Naive thymus-derived CD4-positive, alpha-beta T cell (primary cell): ENCODE measurements at regions of chr12 and their contacts with region 1.

Region 1: DNA sequence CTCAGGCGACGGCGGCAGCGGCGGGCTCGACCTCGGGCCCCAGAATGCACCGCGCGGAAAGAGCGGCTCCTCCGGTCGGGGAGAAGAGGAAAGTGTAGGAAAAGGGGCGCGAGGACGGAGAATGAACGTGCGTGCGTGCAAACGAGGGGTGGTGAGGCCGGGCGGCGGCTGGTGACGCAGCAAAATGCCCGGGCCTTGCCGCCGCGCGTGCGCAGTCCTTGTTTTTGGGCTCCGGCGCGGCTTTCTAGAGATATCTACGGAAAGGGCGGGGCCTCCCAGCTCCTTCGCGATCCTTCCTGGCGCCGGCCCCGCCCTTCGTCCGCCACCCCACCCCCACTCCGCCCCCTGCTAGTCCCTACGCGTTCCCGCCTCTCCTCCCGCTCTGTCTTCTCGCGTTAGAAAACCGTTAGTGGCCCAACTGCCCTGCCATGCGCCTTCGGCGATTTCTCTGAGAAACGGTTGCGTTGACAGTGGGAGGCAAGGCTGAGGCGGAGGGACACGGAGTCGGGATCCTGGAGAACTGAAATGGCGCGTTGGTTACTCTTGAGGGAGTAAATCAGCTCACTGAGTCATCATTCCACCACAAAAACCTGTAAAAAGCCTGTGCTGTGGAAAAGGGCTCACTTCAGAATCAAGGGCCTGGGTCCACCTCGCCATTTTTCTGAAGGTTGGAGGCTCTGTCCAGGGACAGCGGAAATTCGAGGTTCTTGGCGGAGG is at the start of gene PTGES3:
- DNase-seq: peak; percentile 95 to 98 (median 98)
- ATAC-seq: peak; percentile 87
- H3K4me3 ChIP-seq: peak within 1 kb of the TSS; percentile 80
- H3K4me3 Mint-ChIP-seq: peak within 1 kb of the TSS; percentile 97 to 100 (median 100)
- H3K27ac ChIP-seq: peak within 1 kb of the TSS; percentile 98
- H3K27ac Mint-ChIP-seq: peak within 1 kb of the TSS; percentile 95 to 100 (median 99)
- H3K4me1 ChIP-seq: peaks cover 12 to 19% of the 10 kb centered on the region in 2 donors
- H3K4me1 Mint-ChIP-seq: peaks cover 20 to 41% (median 34%) of the 10 kb centered on the region in 7 donors
- H3K27me3 ChIP-seq: no peaks in the 10 kb centered on the region
- H3K27me3 Mint-ChIP-seq: no peaks in the 10 kb centered on the region
- total RNA-seq, gene PTGES3: 111 to 229 (median 153) TPM

Region 2: DNA sequence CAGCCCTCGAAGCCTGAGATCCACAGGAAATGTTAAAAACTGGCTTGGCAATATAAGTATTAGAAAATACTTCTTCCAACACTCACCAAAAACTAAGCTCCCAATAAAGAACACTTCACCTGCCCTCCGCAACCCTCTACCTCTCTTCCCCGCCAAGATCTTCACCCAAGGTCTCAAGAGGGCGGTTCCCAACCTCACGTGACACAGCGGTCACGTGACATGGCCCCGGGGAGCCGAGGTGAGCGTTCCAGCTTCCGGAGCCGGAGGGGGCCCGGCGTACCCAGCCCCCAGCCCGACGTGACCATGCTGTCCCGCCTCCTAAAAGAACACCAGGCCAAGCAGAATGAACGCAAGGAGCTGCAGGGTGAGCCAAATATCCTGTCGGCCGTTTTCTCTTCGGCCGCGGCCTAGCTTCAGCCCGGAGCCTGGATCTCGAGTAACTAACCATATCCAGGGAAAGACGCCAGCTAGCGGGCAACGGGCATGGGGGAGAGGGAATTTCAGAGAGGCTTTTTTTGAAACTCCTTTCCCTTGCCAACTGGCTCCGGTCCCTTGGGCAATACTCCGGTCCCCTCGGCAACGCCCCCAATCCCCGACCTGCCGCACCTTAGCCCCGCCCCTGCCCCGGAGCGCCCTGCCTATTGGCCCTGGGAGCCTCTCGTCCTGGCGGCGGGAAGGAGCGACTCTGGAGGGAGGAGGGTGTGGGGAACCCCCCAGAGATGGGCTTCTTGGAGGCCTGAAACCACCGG is 972.3 kb before region 1 on chr12 and contains the start of gene BLOC1S1:
- CTCF ChIA-PET with region 1: no interaction called
- POLR2A ChIA-PET with region 1: no interaction called
- intact Hi-C with region 1: loop called in 1 of 2 experiments (anchors 5 kb)
- DNase-seq: peak; percentile 82 to 95 (median 90)
- ATAC-seq: peak; percentile 96
- H3K4me3 ChIP-seq: peak within 1 kb of the TSS; percentile 96
- H3K4me3 Mint-ChIP-seq: peak within 1 kb of the TSS; percentile 83 to 98 (median 94)
- H3K27ac ChIP-seq: peak within 1 kb of the TSS; percentile 92
- H3K27ac Mint-ChIP-seq: peak within 1 kb of the TSS; percentile 91 to 98 (median 97)
- H3K4me1 ChIP-seq: peaks cover 19 to 23% of the 10 kb centered on the region in 2 donors
- H3K4me1 Mint-ChIP-seq: peaks cover 15 to 41% (median 36%) of the 10 kb centered on the region in 7 donors
- H3K27me3 ChIP-seq: no peaks in the 10 kb centered on the region
- H3K27me3 Mint-ChIP-seq: peaks cover 0 to 21% (median 0%) of the 10 kb centered on the region in 5 donors
- total RNA-seq, gene BLOC1S1: 37.6 to 112 (median 71.5) TPM

Region 3: DNA sequence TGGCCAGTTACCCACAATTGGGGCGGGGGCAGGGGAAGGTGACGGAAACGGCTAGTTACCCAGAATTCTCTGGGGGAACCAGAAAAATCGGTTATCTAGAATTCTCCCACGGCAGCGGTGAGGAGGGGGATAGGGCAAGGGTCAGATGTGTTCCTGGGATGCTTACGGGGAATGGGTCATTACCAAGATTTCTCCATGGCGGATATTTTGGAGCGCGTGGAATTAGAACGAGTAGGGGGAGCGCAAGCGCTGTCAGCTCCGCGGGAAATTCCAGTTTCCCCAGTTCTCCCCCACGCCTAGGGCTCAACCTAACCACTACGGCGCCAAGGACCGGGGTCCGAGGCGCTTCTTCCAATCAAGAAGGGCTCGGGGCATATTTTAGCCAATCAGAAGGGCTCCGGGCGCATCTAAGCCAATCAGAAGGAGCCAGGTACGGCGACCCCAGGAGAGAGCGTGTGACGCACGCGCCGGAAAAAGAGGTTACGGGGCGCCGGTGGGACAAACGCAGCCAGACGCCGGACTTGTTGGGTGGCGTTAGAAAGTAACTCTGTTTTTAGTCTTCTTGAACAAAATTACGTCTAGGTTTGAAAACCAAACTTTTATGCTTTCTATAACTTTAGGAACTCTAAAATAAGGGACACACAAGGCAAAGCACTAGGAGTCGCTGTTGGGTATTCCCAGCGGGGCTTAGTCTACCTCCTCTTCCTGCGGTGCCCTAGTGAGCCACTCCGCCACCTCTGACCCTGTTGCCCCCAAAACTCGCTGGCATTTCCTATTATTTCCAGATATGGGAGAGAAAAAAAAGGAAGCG is 354.4 kb before region 1 on chr12 and contains the start of gene PAN2:
- CTCF ChIA-PET with region 1: no interaction called
- POLR2A ChIA-PET with region 1: interaction called, 4 read pairs
- intact Hi-C with region 1: loop called in 1 of 2 experiments (anchors 2 kb)
- DNase-seq: peak; percentile 74 to 94 (median 92)
- ATAC-seq: peak; percentile 90
- H3K4me3 ChIP-seq: peak within 1 kb of the TSS; percentile 93
- H3K4me3 Mint-ChIP-seq: peak within 1 kb of the TSS; percentile 89 to 99 (median 95)
- H3K27ac ChIP-seq: peak within 1 kb of the TSS; percentile 98
- H3K27ac Mint-ChIP-seq: peak within 1 kb of the TSS; percentile 97 to 100 (median 99)
- H3K4me1 ChIP-seq: peaks cover 27 to 30% of the 10 kb centered on the region in 2 donors
- H3K4me1 Mint-ChIP-seq: peaks cover 16 to 66% (median 48%) of the 10 kb centered on the region in 7 donors
- H3K27me3 ChIP-seq: no peaks in the 10 kb centered on the region
- H3K27me3 Mint-ChIP-seq: peaks cover 0 to 2% (median 0%) of the 10 kb centered on the region in 5 donors
- total RNA-seq, gene PAN2: 65.8 to 279 (median 144) TPM

Region 4: DNA sequence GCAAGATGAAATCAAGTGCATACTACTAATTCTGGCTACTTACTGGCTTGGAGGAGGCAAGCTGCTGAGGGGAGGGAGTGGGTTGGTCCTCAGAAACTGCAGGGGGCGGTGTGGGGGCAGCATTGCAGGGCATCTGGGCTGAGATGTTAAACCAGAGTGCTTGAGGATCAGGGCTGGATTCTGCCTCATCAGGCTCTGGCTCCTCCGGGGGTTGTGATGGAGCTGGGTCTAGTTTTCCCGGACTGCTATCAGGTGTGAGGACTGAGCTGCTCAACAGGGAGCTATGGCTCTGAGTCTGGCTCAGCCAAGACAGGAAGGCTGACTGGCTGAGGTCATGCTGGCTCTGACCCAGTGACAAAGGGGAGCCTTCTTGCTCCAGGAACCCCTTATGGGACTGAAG is 86.8 kb before region 1 on chr12:
- CTCF ChIA-PET with region 1: no interaction called
- POLR2A ChIA-PET with region 1: no interaction called
- intact Hi-C with region 1: no loop called
- DNase-seq: peak in 6 of 9 donors; percentile 21 to 46 (median 32)
- ATAC-seq: peak; percentile 53
- H3K4me3 ChIP-seq: no peak overlapping the region
- H3K4me3 Mint-ChIP-seq: no peak overlapping the region
- H3K27ac ChIP-seq: no peak overlapping the region
- H3K27ac Mint-ChIP-seq: peak overlapping the region in 3 of 9 donors; percentile 38 to 59 (median 40)
- H3K4me1 ChIP-seq: no peaks in the 10 kb centered on the region
- H3K4me1 Mint-ChIP-seq: peaks cover 0 to 5% (median 0%) of the 10 kb centered on the region in 7 donors
- H3K27me3 ChIP-seq: no peaks in the 10 kb centered on the region
- H3K27me3 Mint-ChIP-seq: no peaks in the 10 kb centered on the region

Region 5: DNA sequence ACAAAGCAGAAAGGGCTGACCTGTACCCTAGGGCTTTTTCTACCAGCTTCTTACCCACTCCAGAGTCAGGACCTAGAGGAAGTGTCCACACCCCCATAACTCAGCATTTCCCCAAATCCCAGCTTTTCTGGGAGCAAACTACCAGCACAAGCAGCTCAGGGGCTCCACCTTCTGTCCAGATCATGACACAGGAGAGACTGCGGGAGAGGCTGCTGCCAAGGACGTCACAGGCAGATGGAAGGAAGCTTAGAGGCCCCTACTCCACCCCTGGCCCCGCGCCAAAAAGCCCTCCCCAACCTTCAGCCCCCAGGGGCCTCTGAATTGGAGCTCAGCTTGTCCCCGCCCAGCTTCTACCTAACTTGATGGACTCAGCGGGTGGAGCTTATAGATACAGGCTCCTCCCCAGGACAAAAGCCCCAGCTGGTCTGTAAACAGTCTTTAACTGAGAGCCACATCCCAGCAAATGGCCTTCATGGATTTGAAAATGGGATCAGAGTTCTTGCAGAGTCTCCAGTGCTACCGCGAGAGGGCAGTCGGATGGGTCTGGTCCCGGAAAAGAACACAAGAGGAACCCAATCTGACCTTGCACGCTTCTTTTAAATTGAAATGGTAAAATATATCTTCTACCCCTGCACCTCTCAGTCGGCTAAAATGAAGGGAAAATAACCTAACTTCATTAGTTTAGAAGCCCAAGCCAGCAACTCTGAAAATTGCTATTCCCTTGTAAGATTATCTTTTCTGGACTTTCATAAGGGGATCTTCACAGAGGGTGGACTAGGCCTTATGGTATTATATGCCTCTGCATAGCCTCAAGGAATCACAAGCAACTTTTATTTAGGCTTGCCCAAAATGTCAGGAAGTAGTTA is 51.4 kb before region 1 on chr12:
- CTCF ChIA-PET with region 1: interaction called, 6 read pairs
- POLR2A ChIA-PET with region 1: interaction called, 103 read pairs
- intact Hi-C with region 1: loop called (anchors 1 kb)
- DNase-seq: peak; percentile 86 to 99 (median 94)
- ATAC-seq: peak; percentile 83
- H3K4me3 ChIP-seq: peak overlapping the region; percentile 73
- H3K4me3 Mint-ChIP-seq: peak overlapping the region; percentile 87 to 100 (median 96)
- H3K27ac ChIP-seq: peak overlapping the region; percentile 83
- H3K27ac Mint-ChIP-seq: peak overlapping the region; percentile 89 to 99 (median 97)
- H3K4me1 ChIP-seq: peaks cover 27 to 36% of the 10 kb centered on the region in 2 donors
- H3K4me1 Mint-ChIP-seq: peaks cover 28 to 69% (median 57%) of the 10 kb centered on the region in 7 donors
- H3K27me3 ChIP-seq: no peaks in the 10 kb centered on the region
- H3K27me3 Mint-ChIP-seq: no peaks in the 10 kb centered on the region

Region 6: DNA sequence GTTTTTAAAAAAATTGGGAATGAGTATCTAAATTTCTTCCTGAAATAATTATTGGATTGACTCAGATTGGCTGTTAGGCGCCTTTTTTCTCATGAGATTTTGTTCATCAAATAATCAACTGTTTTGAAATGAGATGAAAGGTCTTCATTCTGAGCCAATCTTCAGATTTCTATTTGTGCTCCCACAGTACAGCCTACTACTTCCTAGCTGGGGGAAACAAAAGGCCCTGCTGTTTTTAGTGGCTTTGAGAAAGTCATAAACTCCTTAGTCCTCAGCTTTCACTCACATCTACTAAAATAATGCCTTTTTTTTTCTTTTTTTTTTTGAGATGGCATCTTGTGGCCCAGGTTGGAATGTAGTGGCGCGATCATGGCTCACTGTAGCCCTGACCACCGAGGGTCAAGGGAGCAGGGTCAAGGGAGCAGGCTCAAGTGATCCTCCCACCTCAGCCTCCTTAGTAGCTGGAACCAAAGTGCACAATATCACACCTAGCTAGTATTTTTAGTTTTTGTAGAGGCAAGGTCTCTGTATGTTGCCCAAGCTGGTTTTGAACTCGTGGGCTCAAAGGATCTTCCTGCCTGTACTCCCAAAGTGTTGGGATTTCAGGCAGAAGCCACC is 21.6 kb after region 1 on chr12:
- CTCF ChIA-PET with region 1: no interaction called
- POLR2A ChIA-PET with region 1: interaction called, 4 read pairs
- intact Hi-C with region 1: loop called in 1 of 2 experiments (anchors 1 kb)
- DNase-seq: no peak
- ATAC-seq: no peak
- H3K4me3 ChIP-seq: no peak overlapping the region
- H3K4me3 Mint-ChIP-seq: no peak overlapping the region
- H3K27ac ChIP-seq: peak overlapping the region; percentile 14
- H3K27ac Mint-ChIP-seq: peak overlapping the region in 6 of 9 donors; percentile 28 to 72 (median 58)
- H3K4me1 ChIP-seq: no peaks in the 10 kb centered on the region
- H3K4me1 Mint-ChIP-seq: peaks cover 0 to 15% (median 8%) of the 10 kb centered on the region in 7 donors
- H3K27me3 ChIP-seq: no peaks in the 10 kb centered on the region
- H3K27me3 Mint-ChIP-seq: no peaks in the 10 kb centered on the region

Region 7: DNA sequence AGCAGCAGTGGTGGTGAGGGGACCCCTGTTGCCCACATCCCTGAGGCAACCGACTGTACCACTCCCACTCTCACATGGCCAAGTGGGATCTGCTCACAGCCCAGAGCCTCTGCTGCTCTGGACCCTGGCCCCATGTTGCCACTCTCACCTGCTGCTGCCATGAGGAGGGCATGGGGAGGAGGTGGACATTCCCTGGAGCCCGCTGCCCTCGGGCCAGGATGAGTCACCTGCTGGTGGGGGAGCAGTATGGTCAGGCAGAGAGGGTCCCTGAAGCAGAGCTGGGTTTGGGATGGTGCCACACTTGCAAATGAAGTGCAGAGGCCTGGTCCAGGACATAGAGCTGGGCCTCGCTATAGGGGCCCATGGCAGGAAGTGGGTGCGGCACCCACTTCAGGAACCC is 219.8 kb after region 1 on chr12:
- CTCF ChIA-PET with region 1: no interaction called
- POLR2A ChIA-PET with region 1: no interaction called
- intact Hi-C with region 1: no loop called
- DNase-seq: no peak
- ATAC-seq: no peak
- H3K4me3 ChIP-seq: no peak overlapping the region
- H3K4me3 Mint-ChIP-seq: no peak overlapping the region
- H3K27ac ChIP-seq: no peak overlapping the region
- H3K27ac Mint-ChIP-seq: no peak overlapping the region
- H3K4me1 ChIP-seq: no peaks in the 10 kb centered on the region
- H3K4me1 Mint-ChIP-seq: no peaks in the 10 kb centered on the region
- H3K27me3 ChIP-seq: no peaks in the 10 kb centered on the region
- H3K27me3 Mint-ChIP-seq: peaks cover 9 to 27% (median 21%) of the 10 kb centered on the region in 5 donors

Region 8: GRCh38 chr12:57058454-57058853 is 370.2 kb after region 1 on chr12:
- CTCF ChIA-PET with region 1: no interaction called
- POLR2A ChIA-PET with region 1: no interaction called
- intact Hi-C with region 1: no loop called
- DNase-seq: no peak
- ATAC-seq: no peak
- H3K4me3 ChIP-seq: no peak overlapping the region
- H3K4me3 Mint-ChIP-seq: no peak overlapping the region
- H3K27ac ChIP-seq: no peak overlapping the region
- H3K27ac Mint-ChIP-seq: peak overlapping the region in 4 of 9 donors; percentile 13 to 59 (median 36)
- H3K4me1 ChIP-seq: peaks cover 5 to 7% of the 10 kb centered on the region in 2 donors
- H3K4me1 Mint-ChIP-seq: peaks cover 0 to 17% (median 14%) of the 10 kb centered on the region in 7 donors
- H3K27me3 ChIP-seq: no peaks in the 10 kb centered on the region
- H3K27me3 Mint-ChIP-seq: no peaks in the 10 kb centered on the region

Region 9: DNA sequence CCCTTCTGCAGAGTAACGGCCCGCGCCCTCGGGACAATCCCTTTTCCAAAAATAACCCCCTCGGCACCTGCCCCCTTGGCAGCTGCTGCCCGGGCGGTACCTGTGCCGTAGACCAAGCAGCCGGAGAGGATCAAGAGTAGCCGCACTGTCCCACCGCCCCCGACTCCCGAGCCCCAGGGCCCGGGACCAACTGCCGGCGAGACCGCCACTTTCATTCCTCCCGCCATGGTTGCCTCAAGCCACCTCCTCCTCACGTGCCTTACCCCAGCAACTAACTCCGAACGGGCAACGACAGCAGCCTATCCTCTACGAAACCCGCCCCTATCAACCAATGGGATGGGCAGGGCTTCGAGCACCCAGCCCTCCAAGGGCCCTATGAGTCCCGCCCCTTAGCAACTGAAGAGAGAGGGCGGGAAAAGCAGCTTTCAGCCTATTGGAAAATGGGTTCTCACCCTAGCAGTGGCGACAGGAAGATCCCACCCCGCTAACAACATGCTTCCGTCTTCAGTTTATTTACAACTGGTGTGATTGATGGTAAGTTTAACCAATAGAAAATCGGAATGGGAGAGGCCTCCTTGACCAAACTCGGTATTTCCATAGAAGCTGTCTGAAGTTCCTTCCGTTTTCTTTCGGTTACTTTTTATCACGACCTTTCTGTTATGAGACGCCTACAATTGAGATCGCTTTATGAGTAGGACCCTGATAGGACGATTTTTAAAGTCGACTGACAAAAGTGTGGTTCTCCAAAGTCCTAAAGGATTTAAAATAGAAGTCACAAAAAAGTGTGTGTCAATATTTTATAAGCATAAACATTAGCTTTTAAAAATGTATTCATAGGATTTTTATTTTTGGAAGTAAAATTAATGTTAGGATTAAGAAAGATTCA is 390.5 kb after region 1 on chr12 and contains the start of gene NEMP1:
- CTCF ChIA-PET with region 1: no interaction called
- POLR2A ChIA-PET with region 1: interaction called, 4 read pairs
- intact Hi-C with region 1: loop called in 1 of 2 experiments (anchors 1 kb)
- DNase-seq: peak; percentile 65 to 99 (median 98)
- ATAC-seq: peak; percentile 98
- H3K4me3 ChIP-seq: peak within 1 kb of the TSS; percentile 84
- H3K4me3 Mint-ChIP-seq: peak within 1 kb of the TSS; percentile 86 to 99 (median 94)
- H3K27ac ChIP-seq: peak within 1 kb of the TSS; percentile 85
- H3K27ac Mint-ChIP-seq: peak within 1 kb of the TSS; percentile 89 to 99 (median 92)
- H3K4me1 ChIP-seq: peaks cover 6 to 7% of the 10 kb centered on the region in 2 donors
- H3K4me1 Mint-ChIP-seq: peaks cover 0 to 49% (median 25%) of the 10 kb centered on the region in 7 donors
- H3K27me3 ChIP-seq: no peaks in the 10 kb centered on the region
- H3K27me3 Mint-ChIP-seq: no peaks in the 10 kb centered on the region
- total RNA-seq, gene NEMP1: 13.1 to 47.6 (median 29.3) TPM